SK-MEL-5 (cell line): ENCODE measurements at regions of chr2 and their contacts with region 1.

Region 1: DNA sequence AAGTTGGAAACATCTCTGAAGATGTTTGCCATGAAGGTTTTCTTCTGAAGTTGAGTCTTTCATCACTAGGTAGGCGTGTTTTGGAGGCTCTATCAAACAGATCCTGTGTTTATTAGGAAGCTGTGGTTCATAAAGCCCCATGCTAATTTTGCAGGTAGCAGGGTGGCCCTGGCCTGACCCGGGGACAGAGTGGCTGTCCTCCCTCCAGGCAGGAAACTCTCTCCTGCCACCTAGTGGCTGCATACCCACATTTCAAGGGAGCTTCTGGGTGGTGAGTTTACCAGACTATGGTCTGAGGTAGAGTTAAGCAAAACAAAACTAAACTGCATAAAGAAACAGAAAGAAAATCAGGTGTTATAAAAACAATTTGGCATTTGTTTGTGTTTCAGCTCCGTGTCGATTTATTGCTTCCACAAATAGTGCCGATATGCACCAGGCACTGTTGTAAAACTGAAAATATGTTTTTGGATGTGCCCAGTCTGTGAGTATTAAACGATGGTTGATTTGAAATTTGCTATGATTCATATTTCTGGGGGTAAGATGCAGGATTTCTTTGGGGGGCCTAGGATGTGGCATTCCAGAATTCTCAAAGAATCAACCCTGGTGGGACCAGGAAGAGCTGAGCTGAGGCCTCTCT is 26.0 kb upstream of the IL37 start:
- DNase-seq: peak; percentile 70

Region 2: DNA sequence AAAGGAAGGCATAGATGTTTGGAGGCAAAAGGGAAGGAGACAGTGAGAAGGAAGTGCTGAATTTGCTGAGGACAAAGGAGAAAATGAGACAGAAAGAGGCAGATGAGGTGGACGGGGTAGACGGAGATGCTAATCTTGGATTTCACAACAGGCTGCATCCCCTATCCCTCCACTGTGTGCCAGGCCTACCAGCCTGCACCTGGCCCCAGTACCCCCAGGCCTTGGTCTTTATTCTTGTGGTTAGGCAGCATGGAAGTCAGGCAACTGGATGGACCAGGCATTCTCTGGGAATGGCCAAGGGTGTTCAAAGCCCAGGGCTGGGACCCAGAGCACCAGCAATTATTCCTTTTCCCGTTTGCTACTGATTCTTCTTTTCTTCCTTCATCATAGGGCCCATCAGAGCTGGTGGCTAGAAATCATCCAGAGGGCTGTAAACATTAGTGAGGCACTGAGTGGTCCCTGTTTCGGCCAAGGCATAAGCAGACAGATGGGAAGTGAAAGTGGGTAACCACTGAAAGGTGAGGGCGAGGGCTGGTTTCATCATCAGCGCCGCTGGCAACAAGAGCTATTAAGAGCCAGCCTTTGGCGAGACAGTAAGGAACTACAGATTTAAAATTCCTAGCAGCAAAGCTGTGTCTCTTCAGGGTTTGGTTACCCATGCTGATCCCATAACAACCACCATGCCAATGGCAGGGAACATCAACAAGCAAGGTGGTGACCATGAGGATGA is 248.6 kb before region 1 on chr2:
- in situ Hi-C with region 1: no loop called
- DNase-seq: no peak

Region 3: DNA sequence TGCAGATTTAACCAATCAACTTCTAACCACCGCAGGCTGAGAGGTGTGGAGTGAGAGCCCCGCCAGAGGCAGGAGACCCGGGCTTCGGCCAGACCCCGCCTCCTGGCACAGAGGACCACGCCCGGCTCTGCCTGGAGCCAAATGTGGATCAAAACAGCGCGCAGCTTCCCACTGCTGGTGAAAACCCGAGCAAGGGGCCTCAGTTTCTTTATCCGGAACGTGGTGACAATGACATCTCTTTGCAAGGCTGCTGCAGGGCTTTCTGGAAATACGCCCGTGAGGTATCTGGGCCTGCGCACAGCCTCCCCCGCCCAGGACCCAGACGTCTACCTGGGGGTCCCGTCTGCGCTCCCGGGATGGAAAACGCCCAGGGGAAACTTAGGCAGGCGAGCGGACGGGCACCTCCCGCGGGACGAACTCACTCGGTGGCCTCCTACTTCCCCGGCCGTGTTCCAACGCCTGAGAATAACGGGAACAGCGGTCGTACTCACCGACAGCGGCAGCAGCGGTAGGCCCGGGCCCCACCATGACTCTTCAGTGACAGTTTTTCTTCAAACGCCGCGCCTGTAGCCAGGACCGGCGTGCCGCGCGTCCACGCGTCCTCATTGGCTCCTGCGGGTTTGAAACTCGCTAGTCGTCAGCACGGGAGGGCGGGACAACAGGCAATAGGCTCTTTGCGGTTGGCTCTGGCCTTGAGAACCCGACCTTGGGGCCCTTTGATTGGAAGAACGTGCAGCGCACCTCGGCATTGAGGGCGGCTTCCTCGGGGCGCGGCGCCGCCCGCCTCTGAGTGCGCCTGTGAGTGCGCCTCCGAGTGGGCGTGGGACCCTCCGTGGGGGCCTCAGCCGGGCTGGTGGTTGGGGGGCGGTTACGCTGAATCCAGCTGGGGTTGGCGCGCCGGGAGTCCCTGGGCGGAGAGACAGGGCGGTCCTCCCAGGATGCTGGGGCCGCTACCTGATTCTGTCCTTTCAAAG is 120.6 kb before region 1 on chr2 and contains the start of gene CKAP2L:
- in situ Hi-C with region 1: loop called (anchors 25 kb)
- DNase-seq: peak; percentile 97
- total RNA-seq, gene CKAP2L: 7.1 and 7.7 TPM in 2 replicates